ENCODE measurements at regions of chr9 and their contacts with region 1.

Region 1: DNA sequence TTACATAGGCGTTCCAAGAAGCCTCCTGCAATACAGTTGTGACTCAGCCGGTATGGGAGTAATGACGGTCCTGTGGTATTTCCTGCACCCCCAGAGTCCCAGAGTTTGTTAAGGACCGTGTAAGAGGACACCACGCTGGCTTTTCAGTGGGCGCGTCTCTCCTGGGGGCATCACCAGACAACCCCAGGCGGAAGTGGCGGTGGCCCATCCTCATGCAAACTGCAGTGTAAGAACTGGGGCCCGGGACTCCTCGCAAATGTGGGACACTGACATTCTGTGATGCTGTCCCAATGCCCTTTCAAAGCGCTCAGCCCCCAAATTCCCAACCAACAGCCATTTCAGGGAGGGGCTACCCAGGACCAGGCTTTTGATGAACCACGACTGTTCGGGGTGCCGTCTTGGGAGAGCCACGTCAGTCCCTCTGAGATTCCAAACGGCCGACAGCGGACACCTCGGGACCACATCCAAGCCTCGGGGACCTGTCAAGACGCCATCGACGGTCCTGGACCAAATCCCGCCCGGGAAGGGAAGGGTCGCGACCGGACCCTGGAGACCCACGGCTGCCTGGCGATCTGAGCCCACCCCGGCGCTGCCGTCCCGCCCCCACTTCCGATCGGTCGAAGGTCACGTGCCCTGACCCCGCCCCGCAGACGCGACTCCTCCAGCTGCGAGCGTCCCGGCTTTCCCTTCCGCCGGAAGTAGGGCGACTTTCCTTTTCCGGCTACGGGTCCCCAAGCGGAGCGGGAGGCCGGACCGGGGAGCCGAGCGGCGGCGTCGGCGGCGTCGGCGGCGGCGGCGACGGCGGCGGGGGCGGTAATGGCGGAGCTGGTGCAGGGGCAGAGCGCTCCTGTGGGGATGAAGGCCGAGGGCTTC is at the start of gene FUBP3:
- DNase-seq: peak; percentile 95
- H3K4me3 Mint-ChIP-seq: peak within 1 kb of the TSS; percentile 87
- H3K27ac Mint-ChIP-seq: peak within 1 kb of the TSS; percentile 84
- H3K4me1 Mint-ChIP-seq: peaks cover 39% of the 10 kb centered on the region
- H3K27me3 Mint-ChIP-seq: no peaks in the 10 kb centered on the region
- total RNA-seq, gene FUBP3: 29.8 to 32.8 TPM

Region 2: GRCh38 chr9:130654879-130655278 is 75.8 kb after region 1 on chr9:
- CTCF ChIA-PET with region 1: no interaction called
- intact Hi-C with region 1: no loop called
- DNase-seq: no peak
- H3K4me3 Mint-ChIP-seq: no peak overlapping the region
- H3K27ac Mint-ChIP-seq: no peak overlapping the region
- H3K4me1 Mint-ChIP-seq: peaks cover 2% of the 10 kb centered on the region
- H3K27me3 Mint-ChIP-seq: peaks cover 37% of the 10 kb centered on the region

Region 3: DNA sequence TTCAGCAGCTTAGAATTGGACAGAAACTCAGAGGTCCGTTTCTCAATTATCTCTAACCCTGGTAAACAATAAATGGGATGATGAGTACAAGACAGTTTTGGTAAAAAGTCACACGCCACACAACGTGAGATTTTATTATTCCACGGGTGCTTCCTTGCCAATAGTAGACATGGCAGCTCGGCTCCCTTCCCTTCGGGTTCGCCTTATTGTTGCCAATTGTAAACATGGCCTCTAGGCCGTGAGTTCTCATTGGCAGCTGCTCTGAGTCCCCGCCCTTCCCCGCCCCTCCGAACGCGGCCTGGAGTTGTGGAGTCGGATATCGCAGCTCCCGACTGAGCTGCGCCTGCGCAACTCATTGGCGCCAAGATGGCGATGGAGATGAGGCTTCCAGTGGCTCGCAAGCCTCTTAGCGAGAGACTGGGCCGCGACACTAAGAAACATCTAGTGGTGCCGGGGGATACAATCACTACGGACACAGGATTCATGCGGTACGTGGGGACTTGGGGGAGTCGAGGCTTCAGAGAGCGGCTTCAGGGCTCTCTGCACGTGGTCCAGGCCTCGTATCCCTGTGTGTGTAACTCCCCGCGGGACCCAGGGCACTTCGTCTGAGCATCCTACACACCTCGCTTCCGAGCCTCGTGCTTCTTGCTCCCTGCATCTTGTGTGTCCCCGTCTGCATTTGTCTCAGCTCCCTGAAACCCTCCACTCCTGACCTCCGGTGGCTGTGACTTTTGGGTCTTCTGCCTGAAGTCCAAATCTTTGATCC is 114.5 kb after region 1 on chr9 and contains the start of gene EXOSC2:
- CTCF ChIA-PET with region 1: no interaction called
- intact Hi-C with region 1: loop called (anchors 5 kb)
- DNase-seq: peak; percentile 99
- H3K4me3 Mint-ChIP-seq: peak within 1 kb of the TSS; percentile 90
- H3K27ac Mint-ChIP-seq: peak within 1 kb of the TSS; percentile 87
- H3K4me1 Mint-ChIP-seq: peaks cover 38% of the 10 kb centered on the region
- H3K27me3 Mint-ChIP-seq: no peaks in the 10 kb centered on the region
- total RNA-seq, gene EXOSC2: 70.1 to 72.6 TPM